ENCODE measurements at regions of chr12 and their contacts with region 1.

Region 1: DNA sequence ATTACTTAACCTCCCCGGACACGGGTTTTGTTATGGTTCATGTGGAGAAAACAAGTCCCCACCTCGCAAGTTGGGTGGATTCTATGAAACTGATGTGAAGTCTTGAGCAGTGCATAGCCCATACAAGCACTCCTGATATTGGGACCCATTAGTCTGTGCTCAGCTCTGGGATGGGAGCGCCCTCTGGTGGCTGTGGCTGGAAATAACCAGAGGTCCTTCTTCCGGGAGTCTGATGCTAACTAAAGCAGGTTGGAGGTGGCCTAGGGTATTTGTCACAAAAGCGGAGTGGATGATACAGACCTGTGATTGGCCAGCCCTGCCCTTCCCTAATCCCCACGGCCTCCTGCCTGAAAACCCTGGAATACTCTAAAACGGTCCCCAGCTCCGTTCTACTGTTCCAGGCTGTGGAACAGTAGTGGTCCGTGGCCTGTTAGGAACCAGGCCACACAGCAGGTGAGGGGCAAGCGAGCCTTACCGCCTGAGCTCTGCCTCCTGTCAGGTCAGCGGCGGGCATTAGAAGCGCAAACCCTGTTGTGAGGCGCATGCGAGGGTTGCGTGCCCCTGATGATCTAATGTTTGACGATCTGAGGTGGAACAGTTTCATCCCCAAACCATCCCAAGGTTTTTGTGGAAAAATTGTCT is 6.4 kb downstream of the SLC48A1 start:
- DNase-seq: peak; percentile 88
- H3K4me3 Mint-ChIP-seq: no peak overlapping the region
- H3K27ac Mint-ChIP-seq: no peak overlapping the region
- H3K4me1 Mint-ChIP-seq: peaks cover 30% of the 10 kb centered on the region
- H3K27me3 Mint-ChIP-seq: no peaks in the 10 kb centered on the region
- CTCF ChIP-seq: peak; percentile 89

Region 2: GRCh38 chr12:46382964-46383653 is 1396.3 kb before region 1 on chr12:
- CTCF ChIA-PET with region 1: no interaction called
- POLR2A ChIA-PET with region 1: no interaction called
- intact Hi-C with region 1: no loop called
- DNase-seq: peak; percentile 97
- H3K4me3 Mint-ChIP-seq: peak overlapping the region; percentile 91
- H3K27ac Mint-ChIP-seq: peak overlapping the region; percentile 97
- H3K4me1 Mint-ChIP-seq: peaks cover 33% of the 10 kb centered on the region
- H3K27me3 Mint-ChIP-seq: no peaks in the 10 kb centered on the region
- CTCF ChIP-seq: no peak

Region 3: GRCh38 chr12:47715393-47715876 is 64.0 kb before region 1 on chr12:
- CTCF ChIA-PET with region 1: interaction called, 70 read pairs
- POLR2A ChIA-PET with region 1: no interaction called
- intact Hi-C with region 1: loop called (anchors 1 kb)
- DNase-seq: peak; percentile 97
- H3K4me3 Mint-ChIP-seq: peak overlapping the region; percentile 63
- H3K27ac Mint-ChIP-seq: no peak overlapping the region
- H3K4me1 Mint-ChIP-seq: peaks cover 15% of the 10 kb centered on the region
- H3K27me3 Mint-ChIP-seq: no peaks in the 10 kb centered on the region
- CTCF ChIP-seq: peak; percentile 85

Region 4: GRCh38 chr12:47791874-47792273 is 12.5 kb after region 1 on chr12:
- CTCF ChIA-PET with region 1: interaction called, 15 read pairs
- POLR2A ChIA-PET with region 1: interaction called, 5 read pairs
- intact Hi-C with region 1: no loop called
- DNase-seq: no peak
- H3K4me3 Mint-ChIP-seq: no peak overlapping the region
- H3K27ac Mint-ChIP-seq: no peak overlapping the region
- H3K4me1 Mint-ChIP-seq: no peaks in the 10 kb centered on the region
- H3K27me3 Mint-ChIP-seq: no peaks in the 10 kb centered on the region
- CTCF ChIP-seq: no peak

Region 5: GRCh38 chr12:47812797-47813510 is 33.5 kb after region 1 on chr12:
- CTCF ChIA-PET with region 1: interaction called, 10 read pairs
- POLR2A ChIA-PET with region 1: interaction called, 4 read pairs
- intact Hi-C with region 1: loop called (anchors 5 kb)
- DNase-seq: peak; percentile 85
- H3K4me3 Mint-ChIP-seq: peak overlapping the region; percentile 68
- H3K27ac Mint-ChIP-seq: peak overlapping the region; percentile 85
- H3K4me1 Mint-ChIP-seq: peaks cover 75% of the 10 kb centered on the region
- H3K27me3 Mint-ChIP-seq: no peaks in the 10 kb centered on the region
- CTCF ChIP-seq: no peak

Region 6: DNA sequence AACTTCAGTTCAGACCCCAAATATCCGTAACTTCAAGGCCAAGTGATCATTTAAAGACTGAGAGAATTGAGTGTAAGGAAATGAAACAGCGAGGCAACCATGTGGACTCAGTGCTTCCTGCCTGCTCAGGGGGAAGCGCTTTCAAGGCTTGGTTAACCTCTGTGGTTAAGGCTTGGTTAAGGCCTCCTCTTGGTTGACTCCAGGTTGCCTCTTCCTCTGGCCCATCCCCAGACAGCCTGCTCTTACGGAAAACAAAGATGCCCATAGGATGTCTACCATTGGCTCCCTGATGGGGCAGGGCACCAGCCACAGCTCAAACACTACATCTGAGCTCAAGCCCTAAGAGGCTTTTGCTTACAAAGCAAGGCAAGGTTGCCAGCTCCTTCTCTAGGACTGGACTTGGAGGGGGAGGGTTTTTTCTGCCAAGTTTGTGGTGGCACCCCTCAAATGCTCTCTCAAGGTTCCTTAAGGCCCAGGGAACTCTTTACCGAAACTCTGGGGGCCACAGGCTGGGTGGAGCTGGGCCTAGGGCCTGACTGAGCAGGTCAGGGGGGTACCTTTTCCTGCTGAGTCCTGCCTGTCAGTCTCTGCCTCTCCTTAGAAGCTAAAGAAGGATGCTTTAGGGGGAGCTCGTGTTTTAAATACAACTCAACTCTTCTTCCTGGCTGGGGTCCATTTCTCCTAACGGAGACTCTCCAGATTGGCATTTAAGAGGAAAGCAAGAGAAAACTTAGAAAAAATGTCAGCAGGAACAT is 211.1 kb after region 1 on chr12:
- CTCF ChIA-PET with region 1: no interaction called
- POLR2A ChIA-PET with region 1: no interaction called
- intact Hi-C with region 1: no loop called
- DNase-seq: no peak
- H3K4me3 Mint-ChIP-seq: no peak overlapping the region
- H3K27ac Mint-ChIP-seq: no peak overlapping the region
- H3K4me1 Mint-ChIP-seq: no peaks in the 10 kb centered on the region
- H3K27me3 Mint-ChIP-seq: peaks cover 8% of the 10 kb centered on the region
- CTCF ChIP-seq: no peak

Measured in MCF 10A (cell line).